ENCODE measurements at regions of chr16 and their contacts with region 1.

Region 1: GRCh38 chr16:75043175-75043895 is 44.5 kb downstream of the ZNRF1 start:
- DNase-seq: no peak
- H3K4me3 ChIP-seq: no peak overlapping the region
- H3K27ac ChIP-seq: peak overlapping the region; percentile 88
- H3K4me1 ChIP-seq: peaks cover 76% of the 10 kb centered on the region
- H3K27me3 ChIP-seq: no peaks in the 10 kb centered on the region
- CTCF ChIP-seq: no peak

Region 2: GRCh38 chr16:74026373-74027281 is 1016.7 kb before region 1 on chr16:
- intact Hi-C with region 1: no loop called
- DNase-seq: no peak
- H3K4me3 ChIP-seq: no peak overlapping the region
- H3K27ac ChIP-seq: no peak overlapping the region
- H3K4me1 ChIP-seq: no peaks in the 10 kb centered on the region
- H3K27me3 ChIP-seq: peaks cover 32% of the 10 kb centered on the region
- CTCF ChIP-seq: no peak

Region 3: GRCh38 chr16:74657870-74658642 is 385.3 kb before region 1 on chr16:
- intact Hi-C with region 1: no loop called
- DNase-seq: no peak
- H3K4me3 ChIP-seq: no peak overlapping the region
- H3K27ac ChIP-seq: no peak overlapping the region
- H3K4me1 ChIP-seq: peaks cover 8% of the 10 kb centered on the region
- H3K27me3 ChIP-seq: no peaks in the 10 kb centered on the region
- CTCF ChIP-seq: no peak

Region 4: DNA sequence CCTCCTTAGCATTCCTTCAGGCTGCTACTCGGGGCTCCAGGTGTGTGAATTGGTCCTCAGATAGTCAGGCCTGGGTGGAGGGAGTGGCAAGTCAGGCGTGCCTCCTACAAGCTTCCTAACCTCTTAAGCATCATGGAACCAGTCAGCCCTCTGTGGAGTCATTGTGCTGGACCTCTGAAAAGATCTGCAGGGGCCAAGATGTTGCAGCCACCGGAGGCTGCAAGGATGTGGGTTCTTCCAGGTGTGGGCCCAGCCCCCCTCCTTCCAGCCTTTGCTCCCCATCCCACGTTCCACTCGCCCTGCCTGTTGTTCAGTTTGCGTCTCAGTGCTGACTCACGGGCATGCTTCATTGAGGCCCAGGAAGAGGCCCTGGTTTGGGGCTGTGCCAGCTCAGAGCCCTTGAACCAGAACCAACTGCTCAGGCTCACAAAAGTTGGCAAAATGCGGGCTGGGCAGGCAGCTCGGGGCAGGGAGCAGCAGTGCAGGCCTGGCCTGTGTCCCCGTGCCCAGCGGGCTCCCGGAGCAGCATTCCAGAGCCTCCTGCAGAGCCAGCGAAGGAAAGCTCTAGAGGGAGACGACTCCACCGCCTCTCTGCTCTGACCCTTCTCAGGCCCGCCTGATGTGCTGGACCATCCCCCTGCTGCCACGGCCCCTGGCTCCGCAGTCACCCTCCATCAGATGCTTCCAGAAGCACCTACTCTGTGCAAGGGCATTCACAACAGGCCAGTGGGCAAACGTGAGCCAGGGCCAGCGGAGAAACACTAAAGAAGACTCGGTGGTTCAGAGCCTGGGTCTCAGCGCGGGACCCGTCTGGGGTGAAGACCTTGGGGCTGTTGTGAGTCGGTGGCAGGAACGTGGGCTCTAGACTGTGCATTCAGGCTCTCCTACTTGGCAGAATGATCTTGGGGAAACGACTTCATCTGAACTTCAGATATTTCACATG is 65.7 kb after region 1 on chr16:
- intact Hi-C with region 1: loop called (anchors 10 kb)
- DNase-seq: peak; percentile 82
- H3K4me3 ChIP-seq: peak overlapping the region; percentile 50
- H3K27ac ChIP-seq: peak overlapping the region; percentile 94
- H3K4me1 ChIP-seq: peaks cover 99% of the 10 kb centered on the region
- H3K27me3 ChIP-seq: no peaks in the 10 kb centered on the region
- CTCF ChIP-seq: no peak

Measured in left ventricle myocardium inferior (tissue), 1 donor.